ENCODE measurements at regions of chr2 and their contacts with region 1.

Region 1: GRCh38 chr2:11234309-11234708 is 79.0 kb downstream of the SLC66A3 start:
- DNase-seq: no peak
- ATAC-seq: no peak
- H3K4me3 ChIP-seq: no peak overlapping the region
- H3K27ac ChIP-seq: no peak overlapping the region
- H3K4me1 ChIP-seq: no peaks in the 10 kb centered on the region; a peak in 1 of 5 replicates
- H3K27me3 ChIP-seq: no peaks in the 10 kb centered on the region
- CTCF ChIP-seq: peak in 2 of 3 experiments; percentile 8 to 57; a peak in 3 of 6 replicates
- EP300 ChIP-seq: no peak
- POLR2A ChIP-seq: no peak
- RAD21 ChIP-seq: peak; percentile 64 to 75

Region 2: GRCh38 chr2:11320698-11321492 is 86.6 kb after region 1 on chr2:
- CTCF ChIA-PET with region 1: no interaction called
- POLR2A ChIA-PET with region 1: no interaction called
- in situ Hi-C with region 1: no loop called
- intact Hi-C with region 1: loop called (anchors 5 kb)
- DNase-seq: peak; percentile 17 to 55 (median 36)
- ATAC-seq: peak; percentile 99
- H3K4me3 ChIP-seq: no peak overlapping the region
- H3K27ac ChIP-seq: no peak overlapping the region
- H3K4me1 ChIP-seq: peaks cover 4 to 9% of the 10 kb centered on the region in 2 experiments; a peak in 4 of 5 replicates
- H3K27me3 ChIP-seq: no peaks in the 10 kb centered on the region
- CTCF ChIP-seq: peak; percentile 36 to 53 (median 47); a peak in 3 of 6 replicates
- EP300 ChIP-seq: no peak
- POLR2A ChIP-seq: no peak
- RAD21 ChIP-seq: peak in 1 of 2 experiments; percentile 58; a peak in 2 of 4 replicates

Measured in K562 (cell line).